HepG2 (cell line): ENCODE measurements at regions of chr6 and their contacts with region 1.

Region 1: GRCh38 chr6:3789018-3789895 is 37.7 kb upstream of the PXDC1 start:
- DNase-seq: peak; percentile 100
- ATAC-seq: peak; percentile 91
- H3K4me3 ChIP-seq: peak overlapping the region; percentile 40 to 73 (median 45)
- H3K27ac ChIP-seq: peak overlapping the region; percentile 97
- H3K4me1 ChIP-seq: peaks cover 62% of the 10 kb centered on the region
- H3K27me3 ChIP-seq: no peaks in the 10 kb centered on the region
- CTCF ChIP-seq: peak; percentile 7; the same call in 1 of the 2 replicates
- EP300 ChIP-seq: peak; percentile 88 to 97
- POLR2A ChIP-seq: peak; percentile 72 to 88
- RAD21 ChIP-seq: peak; percentile 21

Region 2: DNA sequence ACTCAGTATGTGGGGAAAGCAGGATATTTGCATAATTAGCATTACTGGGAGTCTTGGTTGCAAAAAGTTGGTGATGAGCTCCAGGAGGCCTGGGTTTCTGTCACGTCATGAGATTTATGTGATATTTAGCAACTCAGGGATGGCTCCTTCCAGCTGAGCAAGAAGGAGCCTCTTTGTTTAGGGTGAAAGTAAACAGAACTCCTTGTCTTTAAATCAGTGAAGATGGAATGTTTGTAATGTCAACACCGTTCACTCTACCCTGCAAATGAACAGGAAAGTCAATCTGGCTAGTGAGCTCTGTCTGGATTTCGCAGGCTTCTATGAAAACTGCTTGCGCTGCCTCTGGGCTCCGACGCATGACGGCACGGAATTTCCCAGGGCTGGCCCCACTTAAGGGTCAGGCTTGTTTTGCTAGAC is 124.6 kb before region 1 on chr6:
- CTCF ChIA-PET with region 1: no interaction called
- POLR2A ChIA-PET with region 1: no interaction called
- in situ Hi-C with region 1: no loop called
- intact Hi-C with region 1: no loop called
- DNase-seq: no peak
- ATAC-seq: peak; percentile 66
- H3K4me3 ChIP-seq: no peak overlapping the region
- H3K27ac ChIP-seq: no peak overlapping the region
- H3K4me1 ChIP-seq: peaks cover 12% of the 10 kb centered on the region
- H3K27me3 ChIP-seq: peaks cover 0 to 39% of the 10 kb centered on the region in 2 experiments; a peak in 4 of 5 replicates
- CTCF ChIP-seq: no peak
- EP300 ChIP-seq: no peak
- POLR2A ChIP-seq: no peak
- RAD21 ChIP-seq: no peak

Region 3: DNA sequence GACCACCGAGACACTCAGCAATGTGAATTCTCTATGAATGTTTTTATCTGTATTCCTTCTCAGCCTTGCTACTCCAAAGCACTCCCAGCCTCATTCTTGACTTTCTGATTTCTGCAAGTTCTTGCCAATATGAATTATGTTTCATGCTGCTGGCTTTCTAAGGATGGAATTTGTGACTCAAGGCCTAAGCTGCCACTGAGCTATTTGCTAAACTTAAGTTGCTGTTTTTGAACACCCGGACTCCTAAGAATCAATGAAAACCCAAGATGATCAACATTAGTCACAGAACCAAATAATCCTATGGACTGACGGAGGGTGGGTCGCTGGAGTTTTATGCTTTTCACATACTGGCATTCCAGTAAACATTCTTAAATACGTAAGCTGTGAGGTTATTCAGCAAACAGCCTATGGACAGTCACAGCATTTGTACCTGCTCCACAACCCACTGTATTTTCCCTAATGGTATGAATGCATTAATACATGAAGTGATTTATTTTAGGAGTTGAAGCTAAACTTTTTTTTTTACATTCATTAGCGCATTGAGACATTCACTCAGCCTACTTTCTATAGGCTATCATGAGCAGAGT is 29.5 kb before region 1 on chr6:
- CTCF ChIA-PET with region 1: no interaction called
- POLR2A ChIA-PET with region 1: interaction called, 31 read pairs
- in situ Hi-C with region 1: loop called (anchors 5 kb)
- intact Hi-C with region 1: no loop called
- DNase-seq: peak; percentile 43
- ATAC-seq: peak; percentile 38; the same call in 2 of the 3 replicates
- H3K4me3 ChIP-seq: no peak overlapping the region; a peak in 1 of 6 replicates
- H3K27ac ChIP-seq: no peak overlapping the region
- H3K4me1 ChIP-seq: peaks cover 45% of the 10 kb centered on the region
- H3K27me3 ChIP-seq: peaks cover 0 to 7% of the 10 kb centered on the region in 2 experiments; a peak in 2 of 5 replicates
- CTCF ChIP-seq: no peak
- EP300 ChIP-seq: no peak
- POLR2A ChIP-seq: no peak
- RAD21 ChIP-seq: no peak

Region 4: GRCh38 chr6:3805448-3806123 is 16.3 kb after region 1 on chr6:
- CTCF ChIA-PET with region 1: no interaction called
- POLR2A ChIA-PET with region 1: interaction called, 40 read pairs
- in situ Hi-C with region 1: no loop called
- intact Hi-C with region 1: loop called (anchors 1 kb)
- DNase-seq: peak; percentile 85
- ATAC-seq: peak; percentile 57
- H3K4me3 ChIP-seq: peak overlapping the region; percentile 40 to 63 (median 44); a peak in 5 of 6 replicates
- H3K27ac ChIP-seq: peak overlapping the region; percentile 99
- H3K4me1 ChIP-seq: peaks cover 70% of the 10 kb centered on the region
- H3K27me3 ChIP-seq: no peaks in the 10 kb centered on the region
- CTCF ChIP-seq: 0 out of 2 replicates have a peak, but pooled peaks have one; percentile 5
- EP300 ChIP-seq: 0 out of 4 replicates have a peak, but pooled peaks of 1 of the 2 experiments have one; percentile 24
- POLR2A ChIP-seq: no peak
- RAD21 ChIP-seq: no peak

Region 5: GRCh38 chr6:3813150-3813780 is 24.0 kb after region 1 on chr6:
- CTCF ChIA-PET with region 1: no interaction called
- POLR2A ChIA-PET with region 1: interaction called, 14 read pairs
- in situ Hi-C with region 1: no loop called
- intact Hi-C with region 1: no loop called
- DNase-seq: peak; percentile 33
- ATAC-seq: peak; percentile 78
- H3K4me3 ChIP-seq: peak overlapping the region in 1 of 3 experiments; percentile 25; a peak in 1 of 6 replicates
- H3K27ac ChIP-seq: peak overlapping the region; percentile 15
- H3K4me1 ChIP-seq: peaks cover 30% of the 10 kb centered on the region
- H3K27me3 ChIP-seq: no peaks in the 10 kb centered on the region
- CTCF ChIP-seq: no peak; the same call in 1 of the 2 replicates
- EP300 ChIP-seq: no peak
- POLR2A ChIP-seq: no peak
- RAD21 ChIP-seq: no peak

Region 6: GRCh38 chr6:3825851-3826581 is 36.8 kb after region 1 on chr6:
- CTCF ChIA-PET with region 1: interaction called, 3 read pairs
- POLR2A ChIA-PET with region 1: interaction called, 11 read pairs
- in situ Hi-C with region 1: no loop called
- intact Hi-C with region 1: loop called (anchors 5 kb)
- DNase-seq: peak; percentile 73
- ATAC-seq: peak; percentile 78
- H3K4me3 ChIP-seq: peak overlapping the region; percentile 24 to 43 (median 31); a peak in 5 of 6 replicates
- H3K27ac ChIP-seq: peak overlapping the region; percentile 48
- H3K4me1 ChIP-seq: peaks cover 49% of the 10 kb centered on the region
- H3K27me3 ChIP-seq: no peaks in the 10 kb centered on the region
- CTCF ChIP-seq: no peak
- EP300 ChIP-seq: no peak
- POLR2A ChIP-seq: no peak
- RAD21 ChIP-seq: no peak

Region 7: GRCh38 chr6:3856576-3856975 is 67.3 kb after region 1 on chr6:
- CTCF ChIA-PET with region 1: no interaction called
- POLR2A ChIA-PET with region 1: no interaction called
- in situ Hi-C with region 1: no loop called
- intact Hi-C with region 1: no loop called
- DNase-seq: no peak
- ATAC-seq: no peak
- H3K4me3 ChIP-seq: no peak overlapping the region
- H3K27ac ChIP-seq: no peak overlapping the region
- H3K4me1 ChIP-seq: peaks cover 47% of the 10 kb centered on the region
- H3K27me3 ChIP-seq: no peaks in the 10 kb centered on the region
- CTCF ChIP-seq: no peak
- EP300 ChIP-seq: no peak
- POLR2A ChIP-seq: no peak
- RAD21 ChIP-seq: no peak

Region 8: GRCh38 chr6:3869632-3870527 is 80.6 kb after region 1 on chr6:
- CTCF ChIA-PET with region 1: no interaction called
- POLR2A ChIA-PET with region 1: interaction called, 4 read pairs
- in situ Hi-C with region 1: no loop called
- intact Hi-C with region 1: loop called (anchors 1 kb)
- DNase-seq: peak; percentile 92
- ATAC-seq: peak; percentile 84
- H3K4me3 ChIP-seq: peak overlapping the region; percentile 11 to 64 (median 41)
- H3K27ac ChIP-seq: peak overlapping the region; percentile 79
- H3K4me1 ChIP-seq: peaks cover 68% of the 10 kb centered on the region
- H3K27me3 ChIP-seq: no peaks in the 10 kb centered on the region
- CTCF ChIP-seq: no peak
- EP300 ChIP-seq: peak in 1 of 2 experiments; percentile 89; a peak in 2 of 4 replicates
- POLR2A ChIP-seq: peak; percentile 33 to 85; a peak in 3 of 4 replicates
- RAD21 ChIP-seq: no peak